Mucosa of descending colon (tissue), 3 donors: ENCODE measurements at regions of chr6 and their contacts with region 1.

Region 1: DNA sequence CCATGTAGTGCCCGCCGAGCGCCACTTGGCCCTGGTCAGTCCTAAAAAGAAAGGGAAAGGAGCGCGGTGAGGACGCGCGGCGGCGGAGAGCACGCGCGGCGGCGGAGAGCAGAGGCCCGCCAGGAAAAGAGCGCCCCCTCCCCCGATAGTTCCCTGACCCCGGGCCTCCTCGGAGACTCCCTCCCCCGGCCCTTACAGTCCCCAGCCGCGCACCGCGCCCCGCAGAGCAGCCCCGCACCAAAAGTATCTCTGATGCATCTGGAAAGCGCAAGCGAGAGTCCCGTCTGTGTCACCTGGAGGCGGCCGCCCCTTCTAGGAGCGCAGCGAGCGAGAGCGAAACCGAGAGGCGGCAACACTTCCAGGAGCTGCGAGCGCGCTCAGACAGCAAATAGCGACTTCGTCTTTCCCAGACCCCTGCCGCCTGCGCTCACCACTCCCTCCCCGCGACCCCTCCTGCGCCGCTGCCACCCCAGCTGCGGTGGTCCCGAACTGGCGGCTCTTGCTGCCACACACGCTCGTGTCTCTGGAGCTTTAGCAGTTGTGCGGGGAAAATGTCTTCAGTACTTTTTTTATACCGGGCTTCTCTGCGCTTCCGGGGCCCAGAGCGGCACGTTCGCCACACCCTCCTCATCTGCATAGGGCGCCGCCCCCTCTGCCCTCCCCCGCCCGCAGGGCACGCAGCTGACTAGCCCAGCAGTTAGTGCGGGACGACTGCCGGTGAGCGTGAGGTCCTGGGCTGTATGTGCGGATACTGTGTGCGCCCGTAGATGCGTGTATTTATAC is at the start of gene TENT5A:
- DNase-seq: peak; percentile 96
- ATAC-seq: peak; percentile 84
- H3K4me3 ChIP-seq: peak within 1 kb of the TSS; percentile 79
- H3K4me1 ChIP-seq: no peaks in the 10 kb centered on the region
- CTCF ChIP-seq: no peak
- total RNA-seq, gene TENT5A: 26.3 to 30.4 (median 29.5) TPM

Region 2: GRCh38 chr6:81241126-81242041 is 510.9 kb before region 1 on chr6:
- intact Hi-C with region 1: loop called in 1 of 2 experiments (anchors 5 kb)
- DNase-seq: peak in 1 of 3 donors; percentile 16
- ATAC-seq: peak; percentile 27
- H3K4me3 ChIP-seq: no peak overlapping the region
- H3K4me1 ChIP-seq: no peaks in the 10 kb centered on the region
- CTCF ChIP-seq: no peak

Region 3: DNA sequence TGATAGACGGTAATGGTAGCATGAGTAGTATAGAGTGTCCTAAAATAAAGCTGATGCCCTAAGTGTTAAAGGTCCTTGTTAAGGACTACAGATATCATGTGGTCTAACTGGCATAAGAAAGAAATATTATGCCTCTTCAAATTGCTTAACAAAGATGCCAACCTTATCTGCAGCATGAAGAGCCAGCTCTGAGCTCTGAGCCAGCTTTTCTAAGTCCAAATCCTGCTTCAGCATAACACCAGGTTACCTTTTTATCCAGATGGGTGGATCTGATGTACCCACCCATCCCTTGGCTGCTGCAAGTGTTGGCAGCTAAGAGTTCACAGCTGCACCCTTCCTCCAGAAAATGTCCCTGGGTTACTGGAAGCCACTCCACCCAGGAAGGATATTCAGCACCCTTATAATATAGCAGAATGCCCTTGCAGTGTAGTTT is 83.7 kb before region 1 on chr6:
- intact Hi-C with region 1: no loop called
- DNase-seq: no peak
- ATAC-seq: no peak
- H3K4me3 ChIP-seq: no peak overlapping the region
- H3K4me1 ChIP-seq: no peaks in the 10 kb centered on the region
- CTCF ChIP-seq: no peak